GM12878 (cell line): ENCODE measurements at regions of chr3 and their contacts with region 1.

Region 1: DNA sequence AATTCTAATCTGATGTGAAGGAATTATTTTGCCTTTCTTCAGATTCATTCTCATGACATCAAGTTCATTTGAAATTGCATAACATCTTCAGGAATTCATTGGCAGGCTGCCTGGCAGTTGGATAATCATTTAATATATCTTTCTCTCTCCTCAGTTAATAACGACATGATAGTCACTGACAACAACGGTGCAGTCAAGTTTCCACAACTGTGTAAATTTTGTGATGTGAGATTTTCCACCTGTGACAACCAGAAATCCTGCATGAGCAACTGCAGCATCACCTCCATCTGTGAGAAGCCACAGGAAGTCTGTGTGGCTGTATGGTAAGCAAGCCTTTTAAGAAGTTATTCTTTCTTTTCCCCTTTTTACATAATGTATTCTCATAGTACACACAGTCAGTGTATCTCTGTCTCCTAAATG is 38.2 kb downstream of the TGFBR2 start:
- DNase-seq: no peak
- ATAC-seq: peak; percentile 32; the same call in 2 of the 3 replicates
- H3K4me3 ChIP-seq: no peak overlapping the region
- H3K27ac ChIP-seq: no peak overlapping the region
- H3K4me1 ChIP-seq: peaks cover 36% of the 10 kb centered on the region
- H3K27me3 ChIP-seq: no peaks in the 10 kb centered on the region; a peak in 1 of 4 replicates
- CTCF ChIP-seq: no peak
- EP300 ChIP-seq: peak in 1 of 2 experiments; percentile 64; a peak in 1 of 4 replicates
- POLR2A ChIP-seq: no peak
- RAD21 ChIP-seq: no peak

Region 2: GRCh38 chr3:29789686-29790085 is 854.9 kb before region 1 on chr3:
- CTCF ChIA-PET with region 1: no interaction called
- POLR2A ChIA-PET with region 1: no interaction called
- RAD21 ChIA-PET with region 1: no interaction called
- SMC1A ChIA-PET with region 1: no interaction called
- in situ Hi-C with region 1: no loop called
- intact Hi-C with region 1: no loop called
- DNase-seq: no peak
- ATAC-seq: no peak
- H3K4me3 ChIP-seq: no peak overlapping the region
- H3K27ac ChIP-seq: no peak overlapping the region
- H3K4me1 ChIP-seq: no peaks in the 10 kb centered on the region
- H3K27me3 ChIP-seq: no peaks in the 10 kb centered on the region
- CTCF ChIP-seq: no peak
- EP300 ChIP-seq: no peak
- POLR2A ChIP-seq: no peak
- RAD21 ChIP-seq: no peak

Region 3: GRCh38 chr3:30258426-30259392 is 385.9 kb before region 1 on chr3:
- CTCF ChIA-PET with region 1: no interaction called
- POLR2A ChIA-PET with region 1: no interaction called
- RAD21 ChIA-PET with region 1: no interaction called
- SMC1A ChIA-PET with region 1: no interaction called
- in situ Hi-C with region 1: no loop called
- intact Hi-C with region 1: no loop called
- DNase-seq: no peak
- ATAC-seq: no peak
- H3K4me3 ChIP-seq: no peak overlapping the region
- H3K27ac ChIP-seq: no peak overlapping the region
- H3K4me1 ChIP-seq: no peaks in the 10 kb centered on the region
- H3K27me3 ChIP-seq: no peaks in the 10 kb centered on the region
- CTCF ChIP-seq: no peak
- EP300 ChIP-seq: no peak
- POLR2A ChIP-seq: no peak
- RAD21 ChIP-seq: no peak

Region 4: DNA sequence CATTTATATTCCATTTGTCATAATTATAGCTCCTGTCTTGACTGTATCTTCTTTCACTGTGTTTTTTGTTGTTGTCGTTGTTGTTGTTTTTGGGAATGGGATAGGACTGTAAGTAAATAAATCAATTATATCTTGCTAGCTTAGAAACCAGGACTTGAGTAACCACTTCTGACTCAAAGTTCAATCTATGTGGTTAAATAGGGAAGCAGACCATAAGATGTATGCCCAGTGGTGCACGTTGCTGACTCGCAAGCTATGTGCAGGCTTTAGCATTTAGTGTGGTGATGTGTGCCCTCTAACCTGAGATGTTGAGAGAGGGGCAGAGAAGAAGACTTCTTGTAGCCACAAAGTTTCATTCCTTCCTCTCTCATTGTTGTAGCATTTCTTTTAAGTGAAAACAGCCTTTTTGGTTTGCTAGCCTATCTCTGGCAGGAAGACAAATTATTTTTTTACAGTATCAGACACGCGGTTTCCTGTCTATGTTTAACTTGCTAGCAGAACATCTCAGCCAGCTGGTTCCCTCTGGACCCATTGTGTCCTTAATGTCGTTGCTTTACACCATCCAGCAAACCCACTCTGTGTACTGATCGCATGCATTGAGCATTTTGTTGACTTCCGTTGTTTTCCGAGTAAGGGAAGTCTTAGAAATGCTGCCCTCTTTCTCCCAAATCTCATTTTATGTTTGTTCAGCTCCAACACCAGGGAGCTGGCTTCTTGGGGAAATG is 13.9 kb after region 1 on chr3:
- CTCF ChIA-PET with region 1: interaction called, 4 read pairs
- POLR2A ChIA-PET with region 1: interaction called, 4 read pairs
- RAD21 ChIA-PET with region 1: interaction called, 3 read pairs
- SMC1A ChIA-PET with region 1: interaction called, 23 read pairs
- in situ Hi-C with region 1: no loop called
- intact Hi-C with region 1: loop called (anchors 2 kb)
- DNase-seq: peak; percentile 70
- ATAC-seq: peak; percentile 93
- H3K4me3 ChIP-seq: no peak overlapping the region
- H3K27ac ChIP-seq: no peak overlapping the region
- H3K4me1 ChIP-seq: peaks cover 23% of the 10 kb centered on the region
- H3K27me3 ChIP-seq: no peaks in the 10 kb centered on the region
- CTCF ChIP-seq: no peak
- EP300 ChIP-seq: peak; percentile 27 to 48; a peak in 1 of 4 replicates
- POLR2A ChIP-seq: no peak
- RAD21 ChIP-seq: no peak

Region 5: GRCh38 chr3:31960793-31961431 is 1316.3 kb after region 1 on chr3:
- CTCF ChIA-PET with region 1: no interaction called
- POLR2A ChIA-PET with region 1: interaction called, 12 read pairs
- RAD21 ChIA-PET with region 1: no interaction called
- SMC1A ChIA-PET with region 1: interaction called, 3 read pairs
- in situ Hi-C with region 1: no loop called
- intact Hi-C with region 1: no loop called
- DNase-seq: no peak
- ATAC-seq: peak; percentile 79
- H3K4me3 ChIP-seq: no peak overlapping the region
- H3K27ac ChIP-seq: no peak overlapping the region
- H3K4me1 ChIP-seq: no peaks in the 10 kb centered on the region
- H3K27me3 ChIP-seq: no peaks in the 10 kb centered on the region
- CTCF ChIP-seq: no peak
- EP300 ChIP-seq: no peak
- POLR2A ChIP-seq: no peak
- RAD21 ChIP-seq: no peak